Endothelial cell of umbilical vein (primary cell): ENCODE measurements at regions of chr10 and their contacts with region 1.

Region 1: DNA sequence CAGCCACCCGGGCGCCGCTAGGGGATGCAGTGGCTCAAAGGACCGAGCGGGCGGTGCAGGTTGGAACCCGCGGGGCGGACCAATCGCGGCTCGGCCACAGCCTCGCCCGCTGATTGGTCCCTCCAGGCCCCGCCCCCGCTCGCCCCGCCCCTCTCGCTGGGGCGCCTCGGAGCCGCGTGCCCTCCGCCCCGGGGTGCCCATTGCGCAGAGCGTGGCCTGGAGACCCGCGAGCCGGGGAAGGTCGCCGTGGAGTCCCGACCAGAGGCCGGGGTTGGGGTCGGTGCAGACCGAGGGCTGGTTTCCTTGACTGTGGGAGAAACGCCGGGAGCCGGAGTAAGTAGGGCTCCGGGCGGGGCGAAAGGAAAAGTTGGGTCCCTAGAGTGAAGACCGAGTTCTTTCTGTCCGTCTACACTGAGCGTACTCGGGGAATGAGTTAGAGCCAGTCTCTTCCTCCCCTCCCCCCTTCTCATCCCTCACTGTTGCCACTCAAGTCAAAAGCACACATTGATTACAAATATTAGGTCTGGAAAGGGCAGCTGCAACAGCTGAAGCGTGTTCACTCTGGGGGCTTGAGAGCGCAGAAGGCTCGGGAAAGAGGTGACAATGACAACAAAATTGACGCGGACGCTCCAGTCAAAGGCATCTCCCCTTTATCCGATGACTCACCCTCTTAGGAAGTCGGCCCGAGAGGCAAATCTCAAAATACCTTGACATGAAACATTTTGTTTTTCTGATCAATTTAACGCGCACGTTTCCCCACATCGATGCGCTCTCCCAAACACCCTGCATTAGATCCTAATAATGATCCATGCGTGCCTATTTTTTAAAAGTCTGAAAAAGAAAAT is 820 bp upstream of the GATA3 start:
- DNase-seq: peak; percentile 87
- H3K4me3 ChIP-seq: peak overlapping the region; percentile 9 to 95 (median 72)
- H3K27ac ChIP-seq: peak overlapping the region; percentile 96
- H3K4me1 ChIP-seq: peaks cover 29% of the 10 kb centered on the region
- H3K27me3 ChIP-seq: no peaks in the 10 kb centered on the region
- CTCF ChIP-seq: peak; percentile 71 to 95
- POLR2A ChIP-seq: peak; percentile 53

Region 2: GRCh38 chr10:7649673-7650300 is 403.9 kb before region 1 on chr10:
- CTCF ChIA-PET with region 1: no interaction called
- POLR2A ChIA-PET with region 1: no interaction called
- dilution Hi-C with region 1: no loop called
- intact Hi-C with region 1: no loop called
- DNase-seq: no peak
- H3K4me3 ChIP-seq: no peak overlapping the region
- H3K27ac ChIP-seq: no peak overlapping the region
- H3K4me1 ChIP-seq: no peaks in the 10 kb centered on the region
- H3K27me3 ChIP-seq: no peaks in the 10 kb centered on the region
- CTCF ChIP-seq: no peak
- POLR2A ChIP-seq: no peak

Region 3: DNA sequence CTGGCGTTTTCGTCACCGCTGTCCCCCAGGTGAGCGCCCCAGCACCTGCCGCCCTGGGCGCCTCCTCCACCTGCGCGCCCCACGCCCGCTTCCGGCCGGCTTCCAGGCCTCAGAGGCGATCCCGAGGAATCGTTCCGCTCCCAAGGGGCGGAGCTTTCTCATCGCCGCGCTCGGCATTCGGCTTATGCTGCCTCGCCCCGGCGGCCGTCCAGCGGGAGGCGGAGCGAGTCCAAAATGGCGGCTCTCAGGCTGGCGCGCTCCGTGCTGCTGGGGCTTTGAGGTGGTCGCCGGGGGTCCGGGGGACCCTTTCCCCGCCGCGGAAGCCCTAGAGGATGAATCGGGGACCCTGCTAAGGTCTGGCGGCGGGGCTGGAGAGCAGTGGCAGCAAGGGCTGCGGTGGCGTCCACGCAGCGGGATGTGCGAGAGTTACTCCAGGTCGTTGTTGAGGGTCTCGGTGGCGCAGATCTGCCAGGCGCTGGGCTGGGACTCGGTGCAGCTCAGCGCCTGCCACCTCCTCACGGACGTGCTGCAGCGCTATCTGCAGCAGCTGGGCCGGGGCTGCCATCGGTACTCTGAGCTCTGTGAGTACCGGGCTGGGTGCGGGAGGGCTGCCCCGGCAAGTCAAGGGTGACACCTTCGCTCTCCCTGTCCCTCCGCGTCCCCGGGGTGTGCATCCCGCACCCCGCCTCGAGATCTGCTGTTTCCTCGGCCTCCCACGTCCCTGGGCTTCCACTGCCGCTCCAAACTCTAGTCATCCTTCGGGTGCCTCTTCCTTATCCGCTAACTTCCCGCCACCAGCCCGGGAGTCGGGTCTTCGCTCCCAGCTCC is 235.2 kb before region 1 on chr10 and contains the start of gene TAF3:
- CTCF ChIA-PET with region 1: no interaction called
- POLR2A ChIA-PET with region 1: no interaction called
- dilution Hi-C with region 1: no loop called
- intact Hi-C with region 1: loop called (anchors 5 kb)
- DNase-seq: peak; percentile 85
- H3K4me3 ChIP-seq: peak within 1 kb of the TSS; percentile 70 to 99 (median 83)
- H3K27ac ChIP-seq: peak within 1 kb of the TSS; percentile 6
- H3K4me1 ChIP-seq: peaks cover 4% of the 10 kb centered on the region
- H3K27me3 ChIP-seq: peaks cover 5 to 7% of the 10 kb centered on the region in 2 experiments
- CTCF ChIP-seq: no peak
- POLR2A ChIP-seq: peak; percentile 77
- total RNA-seq, gene TAF3: 10.1 and 10.5 TPM in 2 replicates

Region 4: DNA sequence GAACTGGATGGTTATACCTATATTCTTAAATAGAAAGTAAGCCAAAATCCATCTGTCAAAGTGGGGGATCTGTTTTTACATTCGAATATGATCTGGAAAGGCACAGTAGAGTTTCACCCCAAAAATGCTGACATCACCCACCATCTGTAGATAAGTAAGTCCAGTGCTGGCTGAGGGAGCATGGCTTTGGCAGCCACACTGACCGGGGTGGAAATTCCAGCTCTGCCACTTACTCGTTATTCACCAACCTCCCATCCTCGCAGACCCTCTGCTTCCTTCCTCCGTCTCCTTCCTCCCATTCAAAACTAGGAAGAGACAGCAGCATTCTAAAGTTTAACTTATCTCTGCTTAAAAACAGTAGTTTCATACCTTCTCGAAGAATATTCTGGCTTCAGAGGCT is 84.0 kb before region 1 on chr10:
- CTCF ChIA-PET with region 1: no interaction called
- POLR2A ChIA-PET with region 1: no interaction called
- dilution Hi-C with region 1: no loop called
- intact Hi-C with region 1: loop called (anchors 5 kb)
- DNase-seq: peak; percentile 86
- H3K4me3 ChIP-seq: peak overlapping the region in 1 of 3 experiments; percentile 41
- H3K27ac ChIP-seq: peak overlapping the region; percentile 83
- H3K4me1 ChIP-seq: peaks cover 49% of the 10 kb centered on the region
- H3K27me3 ChIP-seq: no peaks in the 10 kb centered on the region
- CTCF ChIP-seq: no peak
- POLR2A ChIP-seq: no peak

Region 5: DNA sequence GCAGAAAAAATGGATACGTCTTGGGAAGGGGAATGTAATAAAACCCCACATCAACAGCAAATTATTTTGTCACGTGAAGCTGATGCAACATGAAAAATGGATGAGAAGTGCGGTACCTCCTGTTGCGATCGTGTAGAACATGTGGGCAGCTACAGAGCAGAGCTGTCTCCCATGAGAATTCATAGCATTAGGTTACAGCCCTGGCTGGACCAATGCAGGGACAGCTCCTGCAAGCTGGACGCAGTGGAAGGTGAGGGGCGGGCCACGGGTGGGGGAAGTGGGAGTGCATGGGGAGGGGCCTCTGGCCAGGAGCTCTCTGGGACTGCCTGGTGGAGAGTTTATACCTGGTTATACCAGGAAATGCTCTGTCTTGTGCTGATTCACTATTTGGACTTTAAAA is 121.1 kb after region 1 on chr10:
- CTCF ChIA-PET with region 1: no interaction called
- POLR2A ChIA-PET with region 1: no interaction called
- dilution Hi-C with region 1: no loop called
- intact Hi-C with region 1: no loop called
- DNase-seq: no peak
- H3K4me3 ChIP-seq: no peak overlapping the region
- H3K27ac ChIP-seq: no peak overlapping the region
- H3K4me1 ChIP-seq: no peaks in the 10 kb centered on the region
- H3K27me3 ChIP-seq: no peaks in the 10 kb centered on the region
- CTCF ChIP-seq: no peak
- POLR2A ChIP-seq: no peak

Region 6: GRCh38 chr10:8473205-8473604 is 419.5 kb after region 1 on chr10:
- CTCF ChIA-PET with region 1: no interaction called
- POLR2A ChIA-PET with region 1: no interaction called
- dilution Hi-C with region 1: no loop called
- intact Hi-C with region 1: loop called (anchors 1 kb)
- DNase-seq: peak; percentile 49
- H3K4me3 ChIP-seq: no peak overlapping the region
- H3K27ac ChIP-seq: no peak overlapping the region
- H3K4me1 ChIP-seq: no peaks in the 10 kb centered on the region
- H3K27me3 ChIP-seq: peaks cover 7 to 12% of the 10 kb centered on the region in 2 experiments
- CTCF ChIP-seq: peak in 1 of 2 donors; percentile 14
- POLR2A ChIP-seq: no peak

Region 7: DNA sequence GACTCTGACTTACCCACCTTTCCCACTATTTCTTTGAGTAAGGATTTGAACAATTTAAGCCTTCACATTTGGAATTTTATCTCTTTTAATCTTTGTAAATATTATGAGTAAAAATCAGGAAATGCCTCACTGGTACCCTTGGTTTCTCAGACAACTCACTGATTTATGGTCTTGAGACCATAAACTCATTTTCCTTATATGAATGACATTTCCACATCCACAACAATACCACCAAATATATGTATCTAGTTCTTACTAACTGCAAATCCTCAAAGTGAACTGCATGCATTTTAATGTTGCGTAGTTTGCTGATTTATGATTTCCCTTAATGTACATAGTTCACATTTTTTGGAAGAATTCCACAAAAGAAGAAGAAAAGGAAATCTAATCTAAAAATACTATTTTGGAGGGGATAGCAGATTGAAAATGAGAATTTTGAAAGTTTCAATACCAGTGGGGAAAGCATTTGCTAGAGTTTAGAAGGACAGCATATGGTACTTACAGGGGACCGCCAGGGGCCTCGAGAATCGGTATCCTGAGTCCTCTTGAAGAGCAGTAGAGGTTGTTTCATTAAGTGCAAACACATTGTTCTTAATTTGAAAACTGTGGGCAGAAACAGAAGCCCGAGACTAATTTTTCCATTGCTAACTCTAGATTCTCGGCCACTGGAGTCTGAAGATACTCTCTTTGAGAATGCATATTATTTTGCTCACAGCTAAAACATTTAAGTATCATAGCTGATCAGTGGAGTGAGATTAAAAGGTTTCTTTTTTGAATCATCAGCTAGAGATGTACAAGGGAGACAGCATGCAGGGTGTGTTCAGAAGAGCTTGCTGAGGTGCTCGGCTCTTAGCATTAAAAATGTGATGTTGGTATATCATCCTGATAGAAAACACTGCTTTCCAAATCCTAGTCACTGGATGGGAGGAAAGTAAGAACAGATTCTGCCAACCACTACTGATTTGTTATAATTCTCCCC is 964.8 kb after region 1 on chr10:
- CTCF ChIA-PET with region 1: no interaction called
- POLR2A ChIA-PET with region 1: no interaction called
- dilution Hi-C with region 1: no loop called
- intact Hi-C with region 1: loop called (anchors 1 kb)
- DNase-seq: peak; percentile 91
- H3K4me3 ChIP-seq: no peak overlapping the region
- H3K27ac ChIP-seq: peak overlapping the region; percentile 45
- H3K4me1 ChIP-seq: peaks cover 15% of the 10 kb centered on the region
- H3K27me3 ChIP-seq: no peaks in the 10 kb centered on the region
- CTCF ChIP-seq: no peak
- POLR2A ChIP-seq: no peak

Region 8: DNA sequence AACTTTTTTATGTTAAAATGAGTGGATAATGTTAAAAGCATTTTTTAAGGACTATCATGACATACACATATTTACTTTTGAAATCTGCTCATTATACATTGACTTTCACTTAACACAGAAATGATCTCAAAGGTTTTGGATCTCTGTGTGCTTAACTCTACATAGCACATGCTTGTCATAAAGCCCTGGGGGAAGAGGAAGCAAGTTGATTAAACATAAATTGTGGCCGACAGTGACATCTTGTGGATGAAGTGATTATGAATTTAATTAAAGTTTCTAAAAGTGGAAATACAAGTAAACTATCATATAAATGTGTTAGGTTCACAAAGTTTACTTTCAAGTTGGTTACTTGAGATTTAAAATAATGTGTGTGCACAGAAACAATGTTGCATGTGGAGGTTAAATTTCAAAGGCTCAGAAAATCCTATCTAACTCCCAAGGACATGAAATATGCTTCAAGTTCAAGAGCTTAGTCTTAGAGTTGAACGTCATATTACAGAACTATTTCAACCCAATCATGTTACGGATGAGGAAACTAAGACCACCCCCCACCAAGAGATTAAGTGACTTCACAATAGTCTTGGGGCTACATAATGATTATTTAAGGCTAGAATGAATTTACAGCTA is 1248.6 kb after region 1 on chr10:
- CTCF ChIA-PET with region 1: no interaction called
- POLR2A ChIA-PET with region 1: no interaction called
- dilution Hi-C with region 1: no loop called
- intact Hi-C with region 1: loop called (anchors 1 kb)
- DNase-seq: peak; percentile 79
- H3K4me3 ChIP-seq: no peak overlapping the region
- H3K27ac ChIP-seq: no peak overlapping the region
- H3K4me1 ChIP-seq: no peaks in the 10 kb centered on the region
- H3K27me3 ChIP-seq: peaks cover 0 to 2% of the 10 kb centered on the region in 2 experiments
- CTCF ChIP-seq: peak in 1 of 2 donors; percentile 8
- POLR2A ChIP-seq: no peak